ENCODE measurements at regions of chr1 and their contacts with region 1.

Region 1: DNA sequence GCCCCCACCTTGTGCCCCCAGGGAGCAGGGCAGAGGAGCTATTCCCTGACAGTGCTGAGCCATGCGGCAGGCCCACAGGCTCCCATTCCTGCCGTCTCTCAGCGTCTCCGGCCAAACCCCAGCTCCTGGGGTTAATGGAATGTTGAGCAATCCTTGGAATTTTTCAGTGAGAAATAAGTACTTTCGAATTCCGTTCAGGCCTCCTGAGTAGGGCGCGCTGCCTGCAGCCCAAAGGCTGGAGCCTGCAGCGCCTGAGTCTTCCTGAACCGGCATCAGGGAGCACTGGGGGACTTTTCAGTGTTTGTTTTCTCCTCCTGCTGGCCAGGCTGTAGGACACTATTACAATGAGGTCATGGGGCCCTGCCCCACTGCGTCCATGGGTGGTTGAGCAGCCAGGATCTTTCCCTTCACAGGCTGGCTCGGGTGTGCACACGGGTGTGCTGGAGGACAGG is 33.3 kb upstream of the CSF1 start:
- DNase-seq: peak; percentile 97
- H3K4me3 ChIP-seq: peak overlapping the region; percentile 41
- H3K27ac ChIP-seq: peak overlapping the region; percentile 95
- H3K4me1 ChIP-seq: peaks cover 53% of the 10 kb centered on the region
- H3K27me3 ChIP-seq: no peaks in the 10 kb centered on the region

Region 2: GRCh38 chr1:109979489-109980091 is 102.2 kb after region 1 on chr1:
- in situ Hi-C with region 1: loop called (anchors 5 kb)
- DNase-seq: peak; percentile 88
- H3K4me3 ChIP-seq: no peak overlapping the region
- H3K27ac ChIP-seq: peak overlapping the region; percentile 65
- H3K4me1 ChIP-seq: peaks cover 64% of the 10 kb centered on the region
- H3K27me3 ChIP-seq: no peaks in the 10 kb centered on the region

Measured in GM23248 (cell line).